ENCODE measurements at regions of chr14 and their contacts with region 1.

Region 1: DNA sequence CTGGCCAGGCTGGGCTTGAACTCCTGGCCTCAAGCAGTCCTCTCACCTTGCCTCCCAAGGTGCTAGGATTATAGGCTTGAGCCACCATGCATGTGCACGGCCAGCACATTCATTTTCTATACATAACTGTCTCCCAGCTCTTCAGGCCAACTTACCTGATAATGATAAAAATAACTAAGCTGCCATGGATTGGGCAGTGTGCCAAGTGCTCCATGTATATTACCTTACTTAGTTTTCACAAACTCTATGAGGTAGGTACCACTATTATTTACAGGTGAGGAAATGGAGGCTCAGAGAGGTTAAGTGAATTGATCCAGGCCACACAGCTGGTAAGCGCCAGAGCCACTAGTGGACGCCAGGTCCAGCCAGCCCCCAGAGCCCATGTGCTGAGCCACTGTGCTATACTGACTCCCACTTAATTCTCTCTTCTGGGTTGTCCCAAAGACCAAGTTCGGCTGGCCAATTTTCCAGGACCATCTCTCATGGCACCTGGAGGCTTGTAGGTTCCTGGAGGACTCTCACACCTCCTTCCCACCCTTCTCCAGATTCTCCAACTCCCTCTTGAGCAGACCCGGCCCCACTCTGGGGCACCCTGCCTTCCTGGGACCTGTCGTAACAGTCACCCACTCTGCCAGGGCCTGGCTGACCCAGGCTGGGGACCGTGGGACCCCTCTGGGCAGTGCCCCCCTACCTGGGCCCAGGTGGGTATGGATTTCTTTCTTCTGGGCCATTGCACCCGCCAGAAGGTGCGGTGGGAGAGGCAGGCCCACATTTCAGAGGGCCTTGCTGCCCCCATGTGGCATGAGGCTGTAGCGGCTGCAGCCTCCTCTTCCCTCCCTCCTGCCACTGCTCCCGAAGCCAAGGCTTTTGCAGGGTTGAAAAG is 30.2 kb upstream of the CIPC start:
- DNase-seq: peak; percentile 25 to 64 (median 34)
- H3K4me3 ChIP-seq: no peak overlapping the region
- H3K4me3 Mint-ChIP-seq: no peak overlapping the region
- H3K27ac ChIP-seq: no peak overlapping the region
- H3K27ac Mint-ChIP-seq: no peak overlapping the region
- H3K4me1 ChIP-seq: no peaks in the 10 kb centered on the region
- H3K4me1 Mint-ChIP-seq: no peaks in the 10 kb centered on the region
- H3K27me3 ChIP-seq: peaks cover 16% of the 10 kb centered on the region
- H3K27me3 Mint-ChIP-seq: peaks cover 11 to 29% of the 10 kb centered on the region in 2 donors

Region 2: GRCh38 chr14:76742966-76743365 is 324.9 kb before region 1 on chr14:
- CTCF ChIA-PET with region 1: no interaction called
- POLR2A ChIA-PET with region 1: no interaction called
- DNase-seq: no peak
- H3K4me3 ChIP-seq: no peak overlapping the region
- H3K4me3 Mint-ChIP-seq: no peak overlapping the region
- H3K27ac ChIP-seq: no peak overlapping the region
- H3K27ac Mint-ChIP-seq: no peak overlapping the region
- H3K4me1 ChIP-seq: no peaks in the 10 kb centered on the region
- H3K4me1 Mint-ChIP-seq: no peaks in the 10 kb centered on the region
- H3K27me3 ChIP-seq: no peaks in the 10 kb centered on the region
- H3K27me3 Mint-ChIP-seq: peaks cover 27 to 46% of the 10 kb centered on the region in 2 donors

Region 3: GRCh38 chr14:76876076-76876475 is 191.8 kb before region 1 on chr14:
- CTCF ChIA-PET with region 1: interaction called, 280 read pairs
- POLR2A ChIA-PET with region 1: no interaction called
- DNase-seq: peak; percentile 22 to 59 (median 34)
- H3K4me3 ChIP-seq: no peak overlapping the region
- H3K4me3 Mint-ChIP-seq: no peak overlapping the region
- H3K27ac ChIP-seq: no peak overlapping the region
- H3K27ac Mint-ChIP-seq: no peak overlapping the region
- H3K4me1 ChIP-seq: no peaks in the 10 kb centered on the region
- H3K4me1 Mint-ChIP-seq: no peaks in the 10 kb centered on the region
- H3K27me3 ChIP-seq: no peaks in the 10 kb centered on the region
- H3K27me3 Mint-ChIP-seq: peaks cover 0 to 7% of the 10 kb centered on the region in 2 donors

Region 4: DNA sequence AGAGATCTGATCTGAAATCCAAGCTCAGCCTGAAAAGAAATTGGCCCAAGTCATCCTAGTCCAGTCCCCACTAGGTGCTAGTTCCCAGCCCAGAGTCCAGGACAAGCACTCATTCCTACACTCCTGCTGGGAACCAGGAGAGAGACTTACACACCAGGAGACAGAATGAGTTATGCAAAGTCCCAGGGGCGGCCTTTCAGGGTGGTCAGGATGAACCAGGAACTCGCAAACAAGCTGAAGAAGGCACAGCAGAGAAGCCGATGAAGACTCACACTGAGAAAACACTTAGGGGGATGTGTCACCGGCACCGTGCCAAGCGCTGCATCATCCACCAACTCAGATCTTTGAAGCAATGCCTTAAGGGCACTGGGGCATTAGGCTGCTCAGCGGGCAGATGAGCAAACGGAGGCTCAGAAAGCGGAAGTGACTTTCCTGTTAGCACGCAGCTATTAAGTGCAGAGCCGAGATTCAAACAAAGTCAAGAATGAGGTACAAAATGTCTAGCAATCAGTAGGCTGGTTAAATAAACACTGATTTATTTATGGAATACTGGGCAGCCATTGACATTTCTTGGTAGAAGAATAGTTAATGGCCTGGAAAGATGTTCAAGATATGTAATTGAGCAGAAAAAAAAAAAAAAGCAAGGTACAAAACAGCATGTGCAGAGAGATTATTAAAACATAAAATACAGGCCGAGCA is 163.0 kb before region 1 on chr14:
- CTCF ChIA-PET with region 1: interaction called, 13 read pairs
- POLR2A ChIA-PET with region 1: no interaction called
- DNase-seq: peak; percentile 22 to 81 (median 53)
- H3K4me3 ChIP-seq: no peak overlapping the region
- H3K4me3 Mint-ChIP-seq: peak overlapping the region in 6 of 7 donors; percentile 29 to 76 (median 66)
- H3K27ac ChIP-seq: no peak overlapping the region
- H3K27ac Mint-ChIP-seq: peak overlapping the region; percentile 13 to 93 (median 80)
- H3K4me1 ChIP-seq: peaks cover 28% of the 10 kb centered on the region
- H3K4me1 Mint-ChIP-seq: peaks cover 15 to 23% (median 23%) of the 10 kb centered on the region in 3 donors
- H3K27me3 ChIP-seq: no peaks in the 10 kb centered on the region
- H3K27me3 Mint-ChIP-seq: no peaks in the 10 kb centered on the region

Region 5: GRCh38 chr14:76918751-76919543 is 148.9 kb before region 1 on chr14:
- CTCF ChIA-PET with region 1: interaction called, 48 read pairs
- POLR2A ChIA-PET with region 1: no interaction called
- DNase-seq: no peak
- H3K4me3 ChIP-seq: no peak overlapping the region
- H3K4me3 Mint-ChIP-seq: no peak overlapping the region
- H3K27ac ChIP-seq: no peak overlapping the region
- H3K27ac Mint-ChIP-seq: peak overlapping the region in 2 of 8 donors; percentile 50 to 58
- H3K4me1 ChIP-seq: peaks cover 17% of the 10 kb centered on the region
- H3K4me1 Mint-ChIP-seq: peaks cover 13 to 27% (median 24%) of the 10 kb centered on the region in 3 donors
- H3K27me3 ChIP-seq: no peaks in the 10 kb centered on the region
- H3K27me3 Mint-ChIP-seq: no peaks in the 10 kb centered on the region

Region 6: GRCh38 chr14:77086017-77086736 is 18.3 kb after region 1 on chr14:
- CTCF ChIA-PET with region 1: interaction called, 15 read pairs
- POLR2A ChIA-PET with region 1: no interaction called
- DNase-seq: peak in 2 of 5 donors; percentile 14 to 26
- H3K4me3 ChIP-seq: no peak overlapping the region
- H3K4me3 Mint-ChIP-seq: no peak overlapping the region
- H3K27ac ChIP-seq: no peak overlapping the region
- H3K27ac Mint-ChIP-seq: peak overlapping the region in 4 of 8 donors; percentile 47 to 83 (median 66)
- H3K4me1 ChIP-seq: peaks cover 4% of the 10 kb centered on the region
- H3K4me1 Mint-ChIP-seq: peaks cover 0 to 7% (median 5%) of the 10 kb centered on the region in 3 donors
- H3K27me3 ChIP-seq: no peaks in the 10 kb centered on the region
- H3K27me3 Mint-ChIP-seq: peaks cover 7 to 13% of the 10 kb centered on the region in 2 donors

Region 7: GRCh38 chr14:77124345-77125280 is 56.7 kb after region 1 on chr14:
- CTCF ChIA-PET with region 1: interaction called, 38 read pairs
- POLR2A ChIA-PET with region 1: no interaction called
- DNase-seq: peak; percentile 55 to 76 (median 63)
- H3K4me3 ChIP-seq: peak overlapping the region; percentile 84
- H3K4me3 Mint-ChIP-seq: peak overlapping the region; percentile 76 to 87 (median 82)
- H3K27ac ChIP-seq: peak overlapping the region; percentile 64
- H3K27ac Mint-ChIP-seq: peak overlapping the region; percentile 14 to 97 (median 88)
- H3K4me1 ChIP-seq: peaks cover 42% of the 10 kb centered on the region
- H3K4me1 Mint-ChIP-seq: peaks cover 29 to 57% (median 53%) of the 10 kb centered on the region in 3 donors
- H3K27me3 ChIP-seq: peaks cover 9% of the 10 kb centered on the region
- H3K27me3 Mint-ChIP-seq: peaks cover 9 to 14% of the 10 kb centered on the region in 2 donors

Region 8: DNA sequence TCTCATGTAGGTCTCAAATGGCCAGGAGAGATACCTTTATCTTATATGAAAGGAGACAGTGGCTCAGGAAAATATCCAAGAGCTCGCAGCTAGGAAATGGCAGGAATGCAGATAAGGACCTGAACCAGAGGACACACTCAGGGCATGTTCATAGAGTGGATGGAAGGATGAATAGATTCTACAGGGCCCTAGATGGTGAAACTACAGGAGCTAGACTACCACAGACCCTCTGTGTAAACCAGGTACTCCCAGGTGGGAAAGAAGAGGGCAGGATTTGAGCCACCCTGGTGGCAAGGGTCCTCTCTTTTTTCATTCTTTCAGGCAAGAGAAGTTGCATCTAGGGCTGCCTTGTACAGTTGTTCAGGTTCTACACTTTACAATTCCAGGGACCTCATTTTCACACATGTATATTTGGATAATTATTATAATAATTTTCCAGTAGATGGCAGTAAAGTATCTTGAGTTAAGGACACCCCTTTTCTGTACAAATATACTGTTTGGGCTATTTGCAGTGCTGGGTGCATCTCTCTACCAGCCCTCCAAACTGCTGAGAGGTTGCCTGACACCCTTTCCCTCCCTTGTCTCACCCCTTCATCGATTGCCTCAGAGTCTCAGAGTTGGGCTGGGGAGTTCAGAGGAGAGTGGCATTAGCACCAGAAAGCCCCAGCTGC is 84.2 kb after region 1 on chr14:
- CTCF ChIA-PET with region 1: no interaction called
- POLR2A ChIA-PET with region 1: no interaction called
- DNase-seq: peak in 1 of 5 donors; percentile 10
- H3K4me3 ChIP-seq: no peak overlapping the region
- H3K4me3 Mint-ChIP-seq: no peak overlapping the region
- H3K27ac ChIP-seq: no peak overlapping the region
- H3K27ac Mint-ChIP-seq: peak overlapping the region in 1 of 8 donors; percentile 68
- H3K4me1 ChIP-seq: no peaks in the 10 kb centered on the region
- H3K4me1 Mint-ChIP-seq: no peaks in the 10 kb centered on the region
- H3K27me3 ChIP-seq: no peaks in the 10 kb centered on the region
- H3K27me3 Mint-ChIP-seq: peaks cover 7 to 49% of the 10 kb centered on the region in 2 donors